PC-3 (cell line): ENCODE measurements at regions of chr1 and their contacts with region 1.

Region 1: GRCh38 chr1:212141404-212141803 is 105.9 kb downstream of the DTL start:
- DNase-seq: peak; percentile 42
- ATAC-seq: peak; percentile 73
- H3K4me3 ChIP-seq: no peak overlapping the region
- H3K27ac ChIP-seq: no peak overlapping the region
- H3K4me1 ChIP-seq: peaks cover 4% of the 10 kb centered on the region; the same call in 1 of the 2 replicates
- H3K27me3 ChIP-seq: no peaks in the 10 kb centered on the region
- CTCF ChIP-seq: no peak

Region 2: DNA sequence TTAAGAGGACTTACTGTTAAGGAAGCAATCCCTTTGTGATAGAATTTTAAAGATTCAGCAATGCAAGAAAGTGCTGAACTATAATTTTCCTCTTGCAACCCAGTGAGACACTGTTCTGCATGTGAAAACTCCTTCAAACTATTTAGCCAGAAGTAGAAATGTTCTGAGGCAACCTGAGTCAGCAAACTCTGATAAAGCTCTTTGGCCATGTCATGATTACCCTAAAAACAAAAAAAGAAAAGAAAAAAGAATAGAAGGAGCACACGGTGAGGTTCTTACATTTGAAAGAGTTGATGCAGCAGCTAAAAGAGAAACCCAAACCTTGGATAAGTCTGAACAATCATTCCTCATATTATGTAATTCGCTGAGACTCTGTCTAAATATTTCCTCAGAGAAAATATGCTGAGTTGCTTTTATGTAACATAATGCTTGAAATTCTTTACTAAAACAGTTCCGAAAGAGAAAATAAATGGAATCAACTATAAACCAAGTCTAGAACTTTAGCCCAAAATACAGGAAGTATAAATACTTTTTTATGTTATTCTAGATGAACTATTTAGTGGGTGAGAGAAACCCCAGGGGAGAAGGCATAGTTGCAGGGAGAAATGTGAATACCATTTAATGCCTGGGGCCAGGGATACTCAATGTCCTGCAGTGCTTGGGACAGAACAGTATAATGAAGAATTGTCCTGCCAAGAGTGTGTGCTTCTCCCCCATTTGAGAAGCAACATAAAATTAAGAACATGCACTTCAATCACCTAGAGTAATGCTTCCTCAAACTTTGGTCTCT is 166.1 kb before region 1 on chr1:
- CTCF ChIA-PET with region 1: no interaction called
- POLR2A ChIA-PET with region 1: no interaction called
- intact Hi-C with region 1: no loop called
- DNase-seq: no peak
- ATAC-seq: no peak
- H3K4me3 ChIP-seq: no peak overlapping the region
- H3K27ac ChIP-seq: no peak overlapping the region
- H3K4me1 ChIP-seq: no peaks in the 10 kb centered on the region
- H3K27me3 ChIP-seq: no peaks in the 10 kb centered on the region
- CTCF ChIP-seq: no peak

Region 3: GRCh38 chr1:212368073-212368484 is 226.7 kb after region 1 on chr1:
- CTCF ChIA-PET with region 1: no interaction called
- POLR2A ChIA-PET with region 1: no interaction called
- intact Hi-C with region 1: no loop called
- DNase-seq: peak; percentile 94
- ATAC-seq: peak; percentile 99
- H3K4me3 ChIP-seq: no peak overlapping the region
- H3K27ac ChIP-seq: no peak overlapping the region
- H3K4me1 ChIP-seq: no peaks in the 10 kb centered on the region
- H3K27me3 ChIP-seq: no peaks in the 10 kb centered on the region
- CTCF ChIP-seq: peak; percentile 99

Region 4: GRCh38 chr1:212630158-212630900 is 488.9 kb after region 1 on chr1:
- CTCF ChIA-PET with region 1: interaction called, 12 read pairs
- POLR2A ChIA-PET with region 1: no interaction called
- intact Hi-C with region 1: no loop called
- DNase-seq: peak; percentile 77
- ATAC-seq: peak; percentile 89
- H3K4me3 ChIP-seq: no peak overlapping the region
- H3K27ac ChIP-seq: no peak overlapping the region
- H3K4me1 ChIP-seq: no peaks in the 10 kb centered on the region
- H3K27me3 ChIP-seq: no peaks in the 10 kb centered on the region
- CTCF ChIP-seq: peak; percentile 95